MCF 10A (cell line): ENCODE measurements at regions of chr11 and their contacts with region 1.

Region 1: GRCh38 chr11:19561011-19561410 is 151.6 kb upstream of the NAV2 start:
- DNase-seq: peak; percentile 38
- H3K4me3 Mint-ChIP-seq: no peak overlapping the region
- H3K27ac Mint-ChIP-seq: no peak overlapping the region
- H3K4me1 Mint-ChIP-seq: peaks cover 6% of the 10 kb centered on the region
- H3K27me3 Mint-ChIP-seq: peaks cover 5% of the 10 kb centered on the region
- CTCF ChIP-seq: no peak

Region 2: DNA sequence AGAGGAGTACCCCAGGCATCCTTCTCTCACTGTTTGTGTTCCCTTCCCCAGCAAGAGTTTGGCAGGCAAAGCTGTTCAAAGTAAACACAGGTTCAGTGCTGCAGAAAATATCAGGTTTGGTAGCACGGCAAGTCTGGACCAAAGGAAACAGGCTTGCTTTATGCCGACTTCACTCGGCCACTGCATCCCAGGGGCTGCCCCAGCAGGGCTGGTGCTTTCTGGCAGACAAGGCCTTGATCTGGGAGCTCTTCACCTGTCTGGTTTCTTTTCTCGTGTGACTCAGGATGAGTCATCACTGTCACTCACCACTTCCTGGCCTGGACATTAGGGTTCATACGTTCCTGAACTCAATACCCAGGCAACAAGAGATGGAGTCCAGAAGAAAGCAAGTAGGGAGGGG is 99.1 kb after region 1 on chr11:
- CTCF ChIA-PET with region 1: interaction called, 24 read pairs
- POLR2A ChIA-PET with region 1: no interaction called
- intact Hi-C with region 1: no loop called
- DNase-seq: peak; percentile 94
- H3K4me3 Mint-ChIP-seq: no peak overlapping the region
- H3K27ac Mint-ChIP-seq: peak overlapping the region; percentile 73
- H3K4me1 Mint-ChIP-seq: peaks cover 18% of the 10 kb centered on the region
- H3K27me3 Mint-ChIP-seq: no peaks in the 10 kb centered on the region
- CTCF ChIP-seq: no peak

Region 3: DNA sequence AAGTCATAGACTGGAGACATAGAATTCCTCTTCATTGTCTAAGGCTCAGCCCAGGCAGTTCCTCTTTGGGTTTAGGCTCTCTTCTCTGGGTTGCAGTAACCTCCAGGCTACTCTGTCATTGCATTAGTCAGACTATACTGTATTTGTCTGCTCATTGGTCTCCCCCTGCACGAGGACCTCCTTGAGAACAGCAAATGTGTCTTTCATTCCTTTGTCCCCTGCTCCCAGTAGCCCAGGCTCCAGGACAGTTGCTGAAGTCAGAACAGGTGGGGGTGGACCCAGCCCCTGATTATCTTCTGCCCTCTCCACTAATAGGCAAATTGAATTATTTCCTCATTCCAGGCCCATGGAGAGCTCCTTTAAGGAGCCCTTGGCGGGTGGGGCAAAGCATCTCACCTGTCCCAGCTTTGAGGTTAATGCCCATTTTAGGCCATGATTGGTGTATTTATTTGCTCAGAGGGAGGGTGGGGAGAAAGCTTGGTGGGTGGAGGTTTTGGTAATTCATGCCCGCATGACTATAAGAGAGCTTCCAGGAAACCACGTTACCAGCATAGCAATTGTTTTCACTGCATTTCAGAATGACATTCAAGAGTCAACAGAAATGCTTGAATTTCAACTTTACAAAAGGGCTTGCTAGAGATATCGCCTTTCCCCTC is 192.6 kb after region 1 on chr11:
- CTCF ChIA-PET with region 1: interaction called, 13 read pairs
- POLR2A ChIA-PET with region 1: interaction called, 3 read pairs
- intact Hi-C with region 1: no loop called
- DNase-seq: no peak
- H3K4me3 Mint-ChIP-seq: no peak overlapping the region
- H3K27ac Mint-ChIP-seq: no peak overlapping the region
- H3K4me1 Mint-ChIP-seq: no peaks in the 10 kb centered on the region
- H3K27me3 Mint-ChIP-seq: no peaks in the 10 kb centered on the region
- CTCF ChIP-seq: no peak

Region 4: GRCh38 chr11:19759389-19759788 is 198.4 kb after region 1 on chr11:
- CTCF ChIA-PET with region 1: interaction called, 13 read pairs
- POLR2A ChIA-PET with region 1: no interaction called
- intact Hi-C with region 1: no loop called
- DNase-seq: no peak
- H3K4me3 Mint-ChIP-seq: no peak overlapping the region
- H3K27ac Mint-ChIP-seq: no peak overlapping the region
- H3K4me1 Mint-ChIP-seq: no peaks in the 10 kb centered on the region
- H3K27me3 Mint-ChIP-seq: no peaks in the 10 kb centered on the region
- CTCF ChIP-seq: no peak

Region 5: GRCh38 chr11:19808076-19808911 is 247.3 kb after region 1 on chr11:
- CTCF ChIA-PET with region 1: interaction called, 11 read pairs
- POLR2A ChIA-PET with region 1: no interaction called
- intact Hi-C with region 1: loop called (anchors 2 kb)
- DNase-seq: no peak
- H3K4me3 Mint-ChIP-seq: no peak overlapping the region
- H3K27ac Mint-ChIP-seq: peak overlapping the region; percentile 39
- H3K4me1 Mint-ChIP-seq: peaks cover 15% of the 10 kb centered on the region
- H3K27me3 Mint-ChIP-seq: no peaks in the 10 kb centered on the region
- CTCF ChIP-seq: no peak